ENCODE measurements at regions of chr18 and their contacts with region 1.

Region 1: DNA sequence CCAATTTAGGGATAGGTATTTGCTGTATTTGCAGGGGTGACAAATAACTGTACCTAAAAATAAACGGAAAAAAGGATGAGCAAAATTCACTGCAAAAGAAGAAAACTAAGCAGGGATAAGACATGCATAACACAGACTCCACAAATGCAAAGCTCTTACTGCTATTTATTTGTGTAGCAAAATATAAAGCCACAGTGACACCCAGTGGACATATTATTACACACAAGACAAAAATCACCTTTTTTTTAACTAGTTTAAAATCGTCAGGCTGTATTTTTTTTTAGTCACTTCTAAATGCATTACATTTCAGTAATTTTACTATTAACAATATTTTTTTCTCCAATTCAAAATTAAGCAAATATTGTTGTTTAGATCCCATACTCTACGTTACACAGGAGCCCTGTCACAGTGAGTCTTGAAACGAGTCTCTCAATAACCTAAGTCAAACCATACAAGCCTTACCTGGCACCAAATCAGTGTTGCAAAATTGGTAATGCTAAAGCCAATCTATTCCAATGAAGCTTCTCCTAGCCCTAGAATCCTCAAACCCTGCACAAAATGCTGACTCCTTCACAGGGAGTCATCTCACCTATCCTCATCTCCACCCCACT is 23.7 kb downstream of the METTL4 start:
- DNase-seq: no peak
- ATAC-seq: peak in 1 of 2 donors; percentile 42

Region 2: DNA sequence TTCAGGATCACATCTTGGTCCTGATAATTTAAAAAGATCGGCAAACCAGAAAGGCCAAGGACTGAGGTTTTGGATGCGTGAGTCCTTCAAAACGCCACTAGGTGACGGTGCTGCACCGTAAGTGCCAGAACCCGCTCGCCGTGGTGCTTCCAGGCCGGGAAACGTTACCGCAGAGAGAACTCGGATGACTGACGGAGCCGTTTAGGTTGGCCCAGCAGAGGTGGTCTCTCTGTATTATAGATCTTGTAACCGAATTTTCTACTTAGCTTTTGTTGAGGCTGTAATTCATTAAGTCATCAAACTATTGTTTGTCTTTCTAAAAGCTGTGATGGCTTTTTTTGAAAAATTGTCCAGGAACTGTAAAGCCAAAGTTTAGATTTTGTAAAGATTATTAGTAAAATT is 1682.7 kb before region 1 on chr18:
- intact Hi-C with region 1: loop called in 1 of 2 experiments (anchors 5 kb)
- DNase-seq: peak; percentile 76
- ATAC-seq: peak; percentile 78 to 90

Region 3: DNA sequence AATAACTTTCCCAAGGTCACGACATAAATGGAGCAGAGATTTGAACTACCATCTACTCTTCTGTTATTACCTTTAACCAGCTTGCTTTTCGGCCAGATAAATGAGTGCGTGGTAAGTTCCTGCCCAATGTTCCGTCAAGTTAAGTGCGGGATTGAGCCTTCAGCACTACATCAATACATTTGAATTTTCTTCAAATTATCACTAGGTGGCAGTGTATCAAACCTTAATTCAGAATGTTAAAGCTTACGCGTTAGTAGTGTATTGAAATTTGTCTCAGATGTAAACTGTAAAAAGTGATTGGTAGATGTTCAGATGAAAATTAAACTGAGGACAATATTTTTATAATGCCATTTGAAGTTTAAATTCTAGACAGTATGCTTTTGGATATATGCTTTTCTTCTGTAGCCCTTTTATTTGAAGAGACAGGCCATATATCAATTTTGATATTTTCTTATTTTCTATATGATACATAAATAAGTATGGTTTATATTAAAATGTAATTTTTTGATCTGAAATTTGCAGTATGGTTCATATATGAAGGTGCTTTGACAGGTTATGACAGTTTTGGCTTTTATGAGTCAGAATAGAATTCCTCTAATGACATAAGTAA is 961.6 kb before region 1 on chr18:
- intact Hi-C with region 1: loop called (anchors 5 to 10 kb)
- DNase-seq: no peak
- ATAC-seq: peak in 1 of 2 donors; percentile 38

Region 4: GRCh38 chr18:2104620-2105462 is 442.7 kb before region 1 on chr18:
- intact Hi-C with region 1: loop called (anchors 2 to 5 kb)
- DNase-seq: peak; percentile 47
- ATAC-seq: peak; percentile 77 to 79

Region 5: GRCh38 chr18:2337552-2338141 is 209.9 kb before region 1 on chr18:
- intact Hi-C with region 1: loop called in 1 of 2 experiments (anchors 5 kb)
- DNase-seq: peak; percentile 27
- ATAC-seq: no peak